Natural killer cell (primary cell): ENCODE measurements at regions of chr17 and their contacts with region 1.

Region 1: GRCh38 chr17:11182430-11182829 is 58.6 kb upstream of the SHISA6 start:
- DNase-seq: no peak
- ATAC-seq: no peak
- H3K4me3 ChIP-seq: no peak overlapping the region
- H3K4me3 Mint-ChIP-seq: no peak overlapping the region
- H3K27ac ChIP-seq: no peak overlapping the region
- H3K27ac Mint-ChIP-seq: no peak overlapping the region
- H3K4me1 ChIP-seq: no peaks in the 10 kb centered on the region
- H3K4me1 Mint-ChIP-seq: no peaks in the 10 kb centered on the region
- H3K27me3 ChIP-seq: no peaks in the 10 kb centered on the region
- H3K27me3 Mint-ChIP-seq: peaks cover 0 to 7% of the 10 kb centered on the region in 2 donors
- CTCF ChIP-seq: no peak

Region 2: GRCh38 chr17:11170881-11171280 is 11.5 kb before region 1 on chr17:
- intact Hi-C with region 1: loop called (anchors 2 kb)
- DNase-seq: no peak
- ATAC-seq: no peak
- H3K4me3 ChIP-seq: no peak overlapping the region
- H3K4me3 Mint-ChIP-seq: no peak overlapping the region
- H3K27ac ChIP-seq: no peak overlapping the region
- H3K27ac Mint-ChIP-seq: no peak overlapping the region
- H3K4me1 ChIP-seq: no peaks in the 10 kb centered on the region
- H3K4me1 Mint-ChIP-seq: no peaks in the 10 kb centered on the region
- H3K27me3 ChIP-seq: no peaks in the 10 kb centered on the region
- H3K27me3 Mint-ChIP-seq: no peaks in the 10 kb centered on the region
- CTCF ChIP-seq: no peak